Activated T-helper 2 cell treated with anti-CD3 and anti-CD28 coated beads, Interferon-gamma antibody, Interleukin-2, Interleukin-4, amounts not matched to agents 10 μg/mL and 5 μg/mL and 100 μg/mL, durations not matched to agents 14 hours and 24 hours and 36 hours (primary cell): ENCODE measurements at regions of chr14 and their contacts with region 1.

Region 1: GRCh38 chr14:51328064-51328771 is 88.2 kb downstream of the TMX1 start:
- DNase-seq: no peak
- H3K4me3 Mint-ChIP-seq: no peak overlapping the region
- H3K27ac Mint-ChIP-seq: no peak overlapping the region
- H3K4me1 Mint-ChIP-seq: peaks cover 16% of the 10 kb centered on the region
- H3K27me3 Mint-ChIP-seq: peaks cover 24% of the 10 kb centered on the region

Region 2: GRCh38 chr14:51304941-51305340 is 23.3 kb before region 1 on chr14:
- intact Hi-C with region 1: loop called (anchors 2 kb)
- DNase-seq: no peak
- H3K4me3 Mint-ChIP-seq: no peak overlapping the region
- H3K27ac Mint-ChIP-seq: peak overlapping the region; percentile 24
- H3K4me1 Mint-ChIP-seq: peaks cover 13% of the 10 kb centered on the region
- H3K27me3 Mint-ChIP-seq: peaks cover 4% of the 10 kb centered on the region